AG04449 (cell line): ENCODE measurements at regions of chr7 and their contacts with region 1.

Region 1: GRCh38 chr7:40749877-40750276 is 615.1 kb downstream of the SUGCT start:
- DNase-seq: peak; percentile 49
- H3K4me3 ChIP-seq: no peak overlapping the region
- CTCF ChIP-seq: no peak

Region 2: DNA sequence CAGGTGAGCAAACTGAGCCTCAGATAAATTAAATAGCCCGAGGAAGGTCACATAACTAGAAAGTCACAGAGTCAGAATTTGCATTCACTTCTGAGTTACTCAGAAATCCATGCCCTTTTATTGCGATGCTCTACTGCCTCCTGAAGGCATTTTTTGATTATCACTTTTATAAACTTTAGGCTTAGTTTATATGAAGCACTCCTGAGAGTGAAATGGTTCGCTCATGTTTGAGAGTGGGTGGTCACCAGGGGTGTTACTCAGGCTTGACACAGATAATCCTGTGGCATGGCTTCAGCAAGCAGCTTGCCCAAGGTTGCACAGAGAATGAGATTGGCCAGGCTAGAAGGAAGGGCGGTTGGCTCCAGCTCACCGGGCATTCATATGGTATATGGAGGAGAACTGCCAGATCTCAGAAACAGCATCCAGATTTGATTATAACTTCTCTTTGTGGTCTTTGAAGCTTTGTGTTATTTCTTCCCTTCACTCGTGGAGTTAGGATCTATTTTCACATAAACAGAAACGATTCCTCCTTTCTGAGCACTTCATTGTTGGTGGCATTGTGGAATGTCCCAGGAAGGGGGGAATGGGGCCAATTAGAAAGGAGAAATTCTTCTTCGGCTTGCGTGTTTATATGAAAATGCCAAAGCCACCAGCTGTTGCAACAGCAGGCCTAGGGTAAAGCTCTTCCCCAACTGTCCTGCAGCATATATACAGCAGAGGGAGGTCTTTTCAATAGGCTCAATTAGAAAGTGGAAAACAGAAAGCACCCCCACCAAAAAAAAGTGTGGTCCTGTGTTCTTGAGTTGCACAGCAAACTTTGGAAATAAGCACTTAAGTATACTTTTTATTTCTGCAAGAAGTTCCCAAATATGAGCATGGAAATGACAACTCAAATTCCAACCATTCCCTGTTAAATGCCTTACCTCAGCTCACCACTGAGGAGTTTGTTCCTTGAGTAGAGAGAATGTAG is 13.7 kb after region 1 on chr7:
- CTCF ChIA-PET with region 1: interaction called, 10 read pairs
- POLR2A ChIA-PET with region 1: no interaction called
- DNase-seq: peak; percentile 83
- H3K4me3 ChIP-seq: peak overlapping the region; percentile 29; the same call in 1 of the 2 replicates
- CTCF ChIP-seq: peak; percentile 59